ENCODE measurements at regions of chr12 and their contacts with region 1.

Region 1: DNA sequence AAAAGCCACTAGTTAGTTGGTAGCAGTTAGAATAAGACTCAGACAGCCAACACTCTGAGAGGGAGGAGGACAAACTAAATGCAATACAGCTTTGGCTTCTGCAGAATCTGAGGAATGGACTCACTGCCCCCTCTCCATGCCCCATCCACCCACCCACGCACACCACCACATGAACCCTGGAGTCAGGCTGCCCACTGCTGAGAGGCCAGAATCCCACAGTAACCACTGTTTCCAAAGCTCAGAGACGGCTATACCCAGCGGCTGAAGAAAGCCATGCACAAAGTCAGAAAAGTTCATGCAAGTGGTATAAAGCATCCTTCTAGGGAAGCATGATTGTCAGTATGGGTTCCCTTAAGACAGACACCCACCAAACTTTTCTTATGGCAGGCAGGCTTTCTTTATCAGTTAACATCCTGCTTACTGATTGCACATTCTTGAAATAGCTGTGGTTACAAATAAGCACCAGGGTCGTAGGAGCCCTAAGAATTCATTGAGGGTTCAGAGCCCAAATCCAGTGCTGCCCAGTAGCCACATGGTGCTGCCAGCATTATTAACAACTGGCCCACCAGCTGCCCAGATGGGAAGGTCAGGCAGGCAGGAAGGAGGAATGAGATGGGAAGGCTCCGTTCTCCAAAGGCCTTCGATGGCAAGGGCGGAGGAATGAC is 61.5 kb downstream of the NT5DC3 start:
- DNase-seq: no peak
- H3K4me3 ChIP-seq: no peak overlapping the region
- H3K27ac ChIP-seq: no peak overlapping the region
- H3K4me1 ChIP-seq: no peaks in the 10 kb centered on the region
- H3K27me3 ChIP-seq: no peaks in the 10 kb centered on the region
- CTCF ChIP-seq: no peak
- POLR2A ChIP-seq: no peak

Region 2: GRCh38 chr12:103858953-103859601 is 79.5 kb after region 1 on chr12:
- CTCF ChIA-PET with region 1: no interaction called
- POLR2A ChIA-PET with region 1: no interaction called
- dilution Hi-C with region 1: no loop called
- intact Hi-C with region 1: loop called (anchors 5 kb)
- DNase-seq: peak; percentile 28
- H3K4me3 ChIP-seq: no peak overlapping the region
- H3K27ac ChIP-seq: no peak overlapping the region
- H3K4me1 ChIP-seq: peaks cover 5% of the 10 kb centered on the region
- H3K27me3 ChIP-seq: peaks cover 0 to 5% of the 10 kb centered on the region in 2 experiments
- CTCF ChIP-seq: no peak
- POLR2A ChIP-seq: no peak